Natural killer cell (primary cell): ENCODE measurements at regions of chr2 and their contacts with region 1.

Region 1: GRCh38 chr2:240586198-240586918 is at the start of gene CAPN10:
- DNase-seq: peak; percentile 96 to 98
- ATAC-seq: peak; percentile 86 to 92 (median 88)
- H3K4me3 ChIP-seq: peak within 1 kb of the TSS; percentile 89
- H3K4me3 Mint-ChIP-seq: peak within 1 kb of the TSS; percentile 95
- H3K27ac ChIP-seq: peak within 1 kb of the TSS; percentile 91
- H3K27ac Mint-ChIP-seq: peak within 1 kb of the TSS; percentile 89 to 91
- H3K4me1 ChIP-seq: peaks cover 38% of the 10 kb centered on the region
- H3K4me1 Mint-ChIP-seq: peaks cover 38 to 49% of the 10 kb centered on the region in 2 donors
- H3K27me3 ChIP-seq: no peaks in the 10 kb centered on the region
- H3K27me3 Mint-ChIP-seq: no peaks in the 10 kb centered on the region
- CTCF ChIP-seq: no peak
- total RNA-seq, gene CAPN10: 69.3 to 95.1 (median 91.0) TPM

Region 2: GRCh38 chr2:240560480-240561326 is 25.7 kb before region 1 on chr2:
- intact Hi-C with region 1: loop called (anchors 1 kb)
- DNase-seq: peak; percentile 98 to 99
- ATAC-seq: peak; percentile 64 to 85 (median 67)
- H3K4me3 ChIP-seq: peak overlapping the region; percentile 62
- H3K4me3 Mint-ChIP-seq: peak overlapping the region; percentile 93
- H3K27ac ChIP-seq: peak overlapping the region; percentile 96
- H3K27ac Mint-ChIP-seq: peak overlapping the region; percentile 99
- H3K4me1 ChIP-seq: peaks cover 78% of the 10 kb centered on the region
- H3K4me1 Mint-ChIP-seq: peaks cover 60 to 76% of the 10 kb centered on the region in 2 donors
- H3K27me3 ChIP-seq: no peaks in the 10 kb centered on the region
- H3K27me3 Mint-ChIP-seq: no peaks in the 10 kb centered on the region
- CTCF ChIP-seq: peak; percentile 39

Region 3: GRCh38 chr2:240566203-240567136 is 19.9 kb before region 1 on chr2:
- intact Hi-C with region 1: loop called (anchors 1 kb)
- DNase-seq: peak; percentile 91 to 96
- ATAC-seq: peak; percentile 56 to 80 (median 63)
- H3K4me3 ChIP-seq: peak overlapping the region; percentile 76
- H3K4me3 Mint-ChIP-seq: peak overlapping the region; percentile 96
- H3K27ac ChIP-seq: peak overlapping the region; percentile 93
- H3K27ac Mint-ChIP-seq: peak overlapping the region; percentile 99
- H3K4me1 ChIP-seq: peaks cover 87% of the 10 kb centered on the region
- H3K4me1 Mint-ChIP-seq: peaks cover 69 to 79% of the 10 kb centered on the region in 2 donors
- H3K27me3 ChIP-seq: no peaks in the 10 kb centered on the region
- H3K27me3 Mint-ChIP-seq: no peaks in the 10 kb centered on the region
- CTCF ChIP-seq: peak; percentile 98

Region 4: GRCh38 chr2:240646176-240646899 is 60.0 kb after region 1 on chr2:
- intact Hi-C with region 1: no loop called
- DNase-seq: peak; percentile 19 to 58
- ATAC-seq: peak; percentile 45 to 68 (median 67)
- H3K4me3 ChIP-seq: no peak overlapping the region
- H3K4me3 Mint-ChIP-seq: no peak overlapping the region
- H3K27ac ChIP-seq: peak overlapping the region; percentile 20
- H3K27ac Mint-ChIP-seq: no peak overlapping the region
- H3K4me1 ChIP-seq: peaks cover 6% of the 10 kb centered on the region
- H3K4me1 Mint-ChIP-seq: peaks cover 5 to 15% of the 10 kb centered on the region in 2 donors
- H3K27me3 ChIP-seq: no peaks in the 10 kb centered on the region
- H3K27me3 Mint-ChIP-seq: peaks cover 14 to 16% of the 10 kb centered on the region in 2 donors
- CTCF ChIP-seq: no peak

Region 5: GRCh38 chr2:241822264-241822623 is 1235.9 kb after region 1 on chr2:
- intact Hi-C with region 1: no loop called
- DNase-seq: no peak
- ATAC-seq: no peak
- H3K4me3 ChIP-seq: no peak overlapping the region
- H3K4me3 Mint-ChIP-seq: no peak overlapping the region
- H3K27ac ChIP-seq: no peak overlapping the region
- H3K27ac Mint-ChIP-seq: peak overlapping the region in 1 of 2 donors; percentile 72
- H3K4me1 ChIP-seq: peaks cover 10% of the 10 kb centered on the region
- H3K4me1 Mint-ChIP-seq: peaks cover 5 to 28% of the 10 kb centered on the region in 2 donors
- H3K27me3 ChIP-seq: peaks cover 6% of the 10 kb centered on the region
- H3K27me3 Mint-ChIP-seq: peaks cover 6 to 23% of the 10 kb centered on the region in 2 donors
- CTCF ChIP-seq: no peak